ENCODE measurements at regions of chr19 and their contacts with region 1.

Region 1: DNA sequence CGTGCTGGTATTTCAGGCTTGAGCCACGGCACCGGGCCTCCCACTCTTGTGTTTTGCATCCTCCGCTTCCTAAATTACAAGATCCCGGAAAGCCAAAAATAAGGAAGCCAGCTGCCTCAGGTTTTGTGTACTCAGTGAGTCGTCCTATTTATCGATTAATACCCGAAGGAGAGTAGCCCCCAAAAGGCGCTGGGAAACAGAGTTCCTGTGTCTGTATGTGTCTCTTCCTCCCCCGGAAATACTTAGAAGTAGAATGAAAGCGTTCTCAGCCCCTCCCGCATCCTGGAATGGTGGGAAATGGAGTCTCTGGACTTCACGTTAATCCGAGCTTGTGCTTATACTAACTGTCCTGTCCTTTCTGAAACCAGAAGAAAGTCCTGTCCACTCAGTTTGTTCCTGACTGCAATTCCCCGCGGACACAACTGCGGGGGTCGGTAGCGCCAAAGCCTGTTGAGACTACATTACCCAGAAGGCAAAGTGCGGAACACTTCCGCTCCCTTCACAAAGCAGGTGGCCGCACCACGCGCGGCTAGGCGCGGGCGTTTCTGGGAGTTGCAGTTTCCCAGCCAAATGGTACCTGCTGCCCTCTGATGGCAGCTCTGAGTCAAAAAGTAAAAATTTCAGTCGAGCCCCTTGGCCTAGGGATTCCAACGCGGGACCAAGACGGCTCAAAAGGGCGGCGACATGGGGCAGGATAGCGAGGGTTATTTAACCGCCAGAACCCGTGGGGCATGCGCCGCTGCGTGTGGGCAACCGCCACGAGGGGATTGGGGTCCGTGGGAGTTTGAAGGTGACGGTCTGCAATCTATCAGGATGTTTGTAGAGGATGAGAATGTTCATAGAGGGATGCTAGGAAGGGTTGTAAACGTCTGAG is 2.2 kb upstream of the GSK3A start:
- DNase-seq: peak; percentile 89
- H3K4me3 Mint-ChIP-seq: peak overlapping the region; percentile 92
- H3K27ac Mint-ChIP-seq: peak overlapping the region; percentile 91
- H3K4me1 Mint-ChIP-seq: peaks cover 50% of the 10 kb centered on the region
- H3K27me3 Mint-ChIP-seq: no peaks in the 10 kb centered on the region

Region 2: DNA sequence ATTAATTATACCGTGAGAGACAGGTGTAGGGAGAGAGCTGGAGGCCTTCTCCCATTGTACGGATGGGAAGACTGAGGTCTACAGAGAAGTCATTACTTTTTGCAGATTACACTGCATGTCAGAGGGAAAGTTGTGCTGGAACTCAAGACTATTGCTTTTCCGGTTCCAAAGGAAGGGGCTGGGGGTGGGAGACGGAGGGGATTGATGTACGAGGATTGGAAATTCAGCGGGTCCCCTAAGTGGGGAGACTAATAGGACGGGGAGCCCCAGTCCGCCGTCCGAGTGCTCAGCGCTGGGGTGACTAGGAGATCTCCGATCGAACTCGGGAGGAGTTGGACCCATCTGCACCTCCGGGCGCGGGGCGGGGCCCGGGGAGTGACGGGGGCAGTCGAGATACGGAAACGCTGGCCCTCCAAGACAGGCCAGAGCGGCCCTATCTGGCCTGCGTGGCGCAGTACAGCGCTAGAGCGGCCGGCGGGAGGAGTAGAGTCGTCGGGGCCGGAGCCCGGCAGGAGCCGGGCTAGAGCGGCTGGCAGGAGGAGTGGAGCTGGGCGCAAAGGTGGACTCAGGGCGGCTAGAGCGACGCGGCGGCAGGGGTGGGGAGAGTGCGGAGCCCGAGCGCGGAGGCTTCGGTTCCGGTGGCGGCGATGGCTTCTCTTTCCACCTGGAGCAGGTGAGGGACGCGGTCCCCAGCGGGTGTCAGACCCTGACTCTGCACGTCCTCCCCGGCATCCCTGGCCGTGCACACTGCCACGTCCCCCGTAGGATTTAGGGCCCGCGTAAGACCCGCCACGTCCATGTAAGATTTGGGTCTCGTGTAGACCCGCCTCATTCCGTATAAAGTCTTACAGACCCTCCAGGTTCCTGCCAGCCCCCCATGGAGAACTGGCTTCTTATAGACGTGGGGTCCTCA is 360.5 kb before region 1 on chr19:
- intact Hi-C with region 1: loop called (anchors 5 kb)
- DNase-seq: peak; percentile 89
- H3K4me3 Mint-ChIP-seq: peak overlapping the region; percentile 81
- H3K27ac Mint-ChIP-seq: peak overlapping the region; percentile 96
- H3K4me1 Mint-ChIP-seq: peaks cover 56% of the 10 kb centered on the region
- H3K27me3 Mint-ChIP-seq: no peaks in the 10 kb centered on the region

Region 3: GRCh38 chr19:42132851-42133528 is 111.6 kb before region 1 on chr19:
- intact Hi-C with region 1: loop called (anchors 1 kb)
- DNase-seq: peak; percentile 85
- H3K4me3 Mint-ChIP-seq: peak overlapping the region; percentile 93
- H3K27ac Mint-ChIP-seq: peak overlapping the region; percentile 91
- H3K4me1 Mint-ChIP-seq: peaks cover 61% of the 10 kb centered on the region
- H3K27me3 Mint-ChIP-seq: no peaks in the 10 kb centered on the region

Region 4: DNA sequence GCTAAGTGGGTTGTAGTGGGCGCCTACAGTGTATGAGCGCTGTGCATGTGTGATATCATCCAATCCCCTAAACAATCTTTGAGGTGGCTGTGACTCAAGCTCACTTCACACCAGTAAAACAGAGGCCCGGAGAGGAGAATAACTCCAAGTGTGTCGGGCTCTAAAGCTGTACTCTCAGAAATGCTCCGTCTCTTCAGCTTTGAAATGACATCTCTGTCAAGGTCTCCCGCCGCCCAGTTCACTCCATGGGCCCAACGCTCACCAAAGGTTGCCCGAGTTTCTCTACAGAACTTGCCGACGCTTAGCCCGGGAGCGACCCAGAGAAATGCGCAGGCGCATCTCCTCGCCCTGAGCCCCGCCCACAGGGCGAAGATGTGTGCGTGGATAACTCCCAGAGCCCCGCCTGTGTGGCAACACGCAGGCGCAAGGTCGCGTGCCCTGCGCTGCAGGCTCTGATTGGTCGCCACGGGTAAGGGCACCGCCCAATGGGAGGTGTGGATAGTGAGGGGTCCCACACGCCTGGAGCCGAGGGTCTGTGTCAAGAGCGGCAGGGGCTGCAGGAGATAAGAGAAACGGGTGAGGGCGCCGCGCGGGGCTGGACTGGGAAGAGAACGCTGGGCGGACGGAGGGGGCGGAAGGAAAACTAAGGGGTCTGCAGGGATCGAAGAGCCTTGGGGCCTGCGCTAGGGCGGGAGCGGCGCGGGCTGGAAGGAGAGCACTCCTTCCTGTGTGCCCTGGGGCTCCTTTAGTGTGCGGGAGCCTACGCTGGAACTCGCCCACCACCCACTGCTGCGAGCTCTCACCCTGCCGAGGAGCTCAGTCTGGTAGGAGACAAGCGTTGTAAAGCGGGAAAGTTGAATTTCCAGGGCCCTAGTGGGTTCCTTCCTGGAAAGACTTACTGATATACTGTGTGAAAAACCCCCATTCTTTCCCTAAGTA is 24.5 kb before region 1 on chr19 and contains the start of gene ZNF526:
- intact Hi-C with region 1: loop called (anchors 1 kb)
- DNase-seq: peak; percentile 99
- H3K4me3 Mint-ChIP-seq: peak within 1 kb of the TSS; percentile 99
- H3K27ac Mint-ChIP-seq: peak within 1 kb of the TSS; percentile 94
- H3K4me1 Mint-ChIP-seq: peaks cover 52% of the 10 kb centered on the region
- H3K27me3 Mint-ChIP-seq: peaks cover 2% of the 10 kb centered on the region
- total RNA-seq, gene ZNF526: 18.4 and 18.5 TPM in 2 replicates

Region 5: DNA sequence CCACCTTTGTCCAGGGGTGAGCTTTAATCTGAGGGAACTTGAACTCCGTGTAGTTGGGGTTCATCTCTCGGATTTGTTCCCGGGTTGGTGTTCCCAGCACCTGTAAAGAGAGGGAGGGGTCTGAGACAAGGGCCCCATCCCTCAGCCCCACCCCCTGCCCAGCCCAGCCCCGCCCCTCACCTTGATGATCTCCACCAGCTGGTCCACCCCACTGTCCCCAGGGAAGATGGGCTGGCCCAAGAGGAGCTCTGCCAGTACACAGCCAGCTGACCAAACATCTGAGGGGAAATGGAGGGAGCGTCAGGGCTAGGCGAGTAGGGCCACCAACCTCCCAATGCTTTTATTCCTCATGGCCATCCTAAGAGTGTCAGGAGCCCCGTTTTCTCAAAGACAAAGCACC is 11.5 kb before region 1 on chr19:
- intact Hi-C with region 1: no loop called
- DNase-seq: no peak
- H3K4me3 Mint-ChIP-seq: no peak overlapping the region
- H3K27ac Mint-ChIP-seq: peak overlapping the region; percentile 44
- H3K4me1 Mint-ChIP-seq: peaks cover 7% of the 10 kb centered on the region
- H3K27me3 Mint-ChIP-seq: no peaks in the 10 kb centered on the region

Region 6: GRCh38 chr19:42283143-42284065 is 38.8 kb after region 1 on chr19:
- intact Hi-C with region 1: loop called (anchors 1 kb)
- DNase-seq: peak; percentile 92
- H3K4me3 Mint-ChIP-seq: no peak overlapping the region
- H3K27ac Mint-ChIP-seq: no peak overlapping the region
- H3K4me1 Mint-ChIP-seq: peaks cover 47% of the 10 kb centered on the region
- H3K27me3 Mint-ChIP-seq: no peaks in the 10 kb centered on the region

Region 7: DNA sequence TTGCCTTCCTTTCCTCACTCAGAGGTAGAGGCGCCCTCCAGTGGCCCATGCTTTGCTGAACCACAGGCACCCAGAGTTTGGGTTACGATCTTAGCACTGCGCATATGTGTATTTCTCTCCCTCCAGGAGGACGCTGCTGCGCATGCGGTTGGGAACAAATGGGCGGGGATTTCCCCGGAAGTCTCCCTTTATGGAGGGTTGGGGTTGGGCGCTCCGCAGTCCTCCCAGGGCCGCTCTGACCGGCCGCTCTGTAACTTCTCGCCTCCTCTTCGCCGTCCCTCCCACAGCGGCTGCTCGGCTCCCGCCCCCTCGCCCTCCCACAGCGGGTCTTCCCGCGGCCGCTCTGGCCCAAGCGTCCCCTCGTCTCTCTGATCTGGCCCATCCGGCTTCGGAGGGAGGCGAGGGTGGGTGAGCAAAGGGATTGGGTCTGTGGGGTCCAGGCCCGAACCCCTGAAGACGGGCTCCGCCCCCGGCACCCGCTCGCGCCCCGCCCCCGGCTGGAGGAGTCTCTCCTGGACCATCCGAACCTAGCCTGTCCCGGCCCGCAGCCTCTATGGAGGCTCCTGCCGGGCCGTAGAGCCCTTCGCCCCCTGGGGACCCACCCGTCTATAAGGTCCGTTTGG is 80.8 kb after region 1 on chr19 and contains the start of gene MEGF8:
- intact Hi-C with region 1: loop called (anchors 1 kb)
- DNase-seq: peak; percentile 98
- H3K4me3 Mint-ChIP-seq: peak within 1 kb of the TSS; percentile 90
- H3K27ac Mint-ChIP-seq: peak within 1 kb of the TSS; percentile 53
- H3K4me1 Mint-ChIP-seq: peaks cover 15% of the 10 kb centered on the region
- H3K27me3 Mint-ChIP-seq: peaks cover 32% of the 10 kb centered on the region
- total RNA-seq, gene MEGF8: 7.5 and 7.8 TPM in 2 replicates

Region 8: GRCh38 chr19:42352301-42353259 is 108.0 kb after region 1 on chr19:
- intact Hi-C with region 1: no loop called
- DNase-seq: no peak
- H3K4me3 Mint-ChIP-seq: no peak overlapping the region
- H3K27ac Mint-ChIP-seq: no peak overlapping the region
- H3K4me1 Mint-ChIP-seq: no peaks in the 10 kb centered on the region
- H3K27me3 Mint-ChIP-seq: no peaks in the 10 kb centered on the region

Measured in activated T-helper 1 cell treated with anti-CD3 and anti-CD28 coated beads, Interleukin-12 subunit alpha, Interleukin-12 subunit beta, Interleukin-2, Interleukin-4 antibody, amounts not matched to agents 30 ng/mL and 10 ng/mL and 1 ng/mL, durations not matched to agents 14 hours and 24 hours and 36 hours (primary cell).